ENCODE measurements at regions of chr19 and their contacts with region 1.

Region 1: GRCh38 chr19:43595999-43596841 is at the starts of genes IRGQ and ZNF576:
- DNase-seq: peak; percentile 98
- ATAC-seq: peak; percentile 86
- H3K4me3 ChIP-seq: peak within 1 kb of the TSS; percentile 93
- H3K27ac ChIP-seq: peak within 1 kb of the TSS; percentile 85
- H3K4me1 ChIP-seq: peaks cover 7% of the 10 kb centered on the region; the same call in 1 of the 2 replicates
- H3K27me3 ChIP-seq: no peaks in the 10 kb centered on the region
- CTCF ChIP-seq: peak in 1 of 3 experiments; percentile 12; a peak in 1 of 6 replicates
- EP300 ChIP-seq: no peak
- POLR2A ChIP-seq: peak; percentile 48
- RAD21 ChIP-seq: no peak
- polyA plus RNA-seq, gene IRGQ: 3.3 to 10.7 TPM
- polyA plus RNA-seq, gene ZNF576: 13.2 to 15.2 TPM

Region 2: DNA sequence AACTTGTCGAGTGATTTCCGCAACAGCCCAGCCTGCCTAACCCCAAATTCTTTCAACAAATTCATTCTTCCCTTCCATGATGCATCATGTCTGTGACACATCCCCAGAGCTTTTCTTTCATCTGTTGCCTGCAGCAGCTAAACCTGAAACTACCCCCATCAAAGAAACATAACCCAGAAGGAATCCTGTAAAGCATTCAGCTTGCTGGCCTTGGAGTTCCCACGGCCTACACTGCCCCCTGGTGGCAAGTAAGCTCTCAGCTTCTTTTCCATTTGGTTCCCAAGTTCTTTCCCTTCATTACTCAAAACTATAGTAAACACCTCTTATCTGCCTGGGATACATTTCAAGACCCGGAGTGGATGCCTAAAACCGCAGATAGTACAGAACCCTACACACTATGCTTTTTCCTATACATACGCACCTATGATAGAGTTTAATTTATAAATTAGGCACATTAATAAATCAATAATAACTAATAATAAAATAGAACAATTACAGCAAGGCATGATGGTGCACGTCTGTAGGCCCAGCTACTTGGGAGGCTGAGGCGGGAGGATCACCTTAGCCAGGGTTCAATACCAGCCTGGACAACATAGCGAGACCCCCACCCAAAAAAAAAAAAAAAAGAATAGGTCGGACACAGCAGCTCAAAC is 76.7 kb before region 1 on chr19:
- CTCF ChIA-PET with region 1: interaction called, 37 read pairs
- POLR2A ChIA-PET with region 1: interaction called, 13 read pairs
- RAD21 ChIA-PET with region 1: interaction called, 29 read pairs
- SMC1A ChIA-PET with region 1: interaction called, 6 read pairs
- in situ Hi-C with region 1: no loop called
- intact Hi-C with region 1: no loop called
- DNase-seq: peak; percentile 33
- ATAC-seq: peak; percentile 77
- H3K4me3 ChIP-seq: no peak overlapping the region
- H3K27ac ChIP-seq: no peak overlapping the region
- H3K4me1 ChIP-seq: peaks cover under 1% of the 10 kb centered on the region; the same call in 1 of the 2 replicates
- H3K27me3 ChIP-seq: no peaks in the 10 kb centered on the region
- CTCF ChIP-seq: peak; percentile 76 to 90 (median 88)
- EP300 ChIP-seq: no peak
- POLR2A ChIP-seq: no peak
- RAD21 ChIP-seq: peak; percentile 95

Region 3: DNA sequence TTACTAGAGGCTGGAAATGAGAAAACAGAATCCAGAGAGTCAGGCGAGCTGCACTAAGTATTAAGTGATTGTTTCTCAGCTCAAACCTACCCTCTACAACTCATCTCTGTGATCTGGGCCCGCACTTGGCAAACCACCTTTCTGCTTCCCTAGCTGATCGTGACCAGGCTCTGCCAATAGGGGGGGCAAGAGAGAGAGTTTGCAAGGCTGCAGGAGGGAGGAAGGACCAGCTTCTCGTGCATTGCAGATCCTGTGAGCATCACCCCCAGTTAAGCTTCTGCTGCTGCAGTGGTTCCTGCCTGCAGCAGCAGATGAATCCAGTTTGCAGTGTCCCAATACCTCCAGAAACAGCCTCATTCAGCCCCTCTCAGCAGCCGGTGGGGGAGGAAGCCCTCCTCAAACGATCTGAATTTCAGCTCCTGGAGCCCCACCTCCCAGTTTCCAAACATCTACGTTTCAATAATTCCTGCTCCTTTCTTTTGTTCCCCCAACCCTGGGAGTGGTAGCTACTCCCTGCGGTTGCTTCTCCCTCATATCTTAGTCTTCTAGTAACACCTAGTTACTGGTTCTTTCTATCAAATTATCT is 40.9 kb before region 1 on chr19:
- CTCF ChIA-PET with region 1: interaction called, 169 read pairs
- POLR2A ChIA-PET with region 1: interaction called, 3 read pairs
- RAD21 ChIA-PET with region 1: interaction called, 92 read pairs
- SMC1A ChIA-PET with region 1: interaction called, 59 read pairs
- in situ Hi-C with region 1: no loop called
- intact Hi-C with region 1: loop called (anchors 1 kb)
- DNase-seq: no peak
- ATAC-seq: peak; percentile 94
- H3K4me3 ChIP-seq: no peak overlapping the region
- H3K27ac ChIP-seq: no peak overlapping the region
- H3K4me1 ChIP-seq: no peaks in the 10 kb centered on the region
- H3K27me3 ChIP-seq: no peaks in the 10 kb centered on the region
- CTCF ChIP-seq: peak; percentile 86 to 95 (median 88)
- EP300 ChIP-seq: no peak
- POLR2A ChIP-seq: no peak
- RAD21 ChIP-seq: peak; percentile 75

Region 4: DNA sequence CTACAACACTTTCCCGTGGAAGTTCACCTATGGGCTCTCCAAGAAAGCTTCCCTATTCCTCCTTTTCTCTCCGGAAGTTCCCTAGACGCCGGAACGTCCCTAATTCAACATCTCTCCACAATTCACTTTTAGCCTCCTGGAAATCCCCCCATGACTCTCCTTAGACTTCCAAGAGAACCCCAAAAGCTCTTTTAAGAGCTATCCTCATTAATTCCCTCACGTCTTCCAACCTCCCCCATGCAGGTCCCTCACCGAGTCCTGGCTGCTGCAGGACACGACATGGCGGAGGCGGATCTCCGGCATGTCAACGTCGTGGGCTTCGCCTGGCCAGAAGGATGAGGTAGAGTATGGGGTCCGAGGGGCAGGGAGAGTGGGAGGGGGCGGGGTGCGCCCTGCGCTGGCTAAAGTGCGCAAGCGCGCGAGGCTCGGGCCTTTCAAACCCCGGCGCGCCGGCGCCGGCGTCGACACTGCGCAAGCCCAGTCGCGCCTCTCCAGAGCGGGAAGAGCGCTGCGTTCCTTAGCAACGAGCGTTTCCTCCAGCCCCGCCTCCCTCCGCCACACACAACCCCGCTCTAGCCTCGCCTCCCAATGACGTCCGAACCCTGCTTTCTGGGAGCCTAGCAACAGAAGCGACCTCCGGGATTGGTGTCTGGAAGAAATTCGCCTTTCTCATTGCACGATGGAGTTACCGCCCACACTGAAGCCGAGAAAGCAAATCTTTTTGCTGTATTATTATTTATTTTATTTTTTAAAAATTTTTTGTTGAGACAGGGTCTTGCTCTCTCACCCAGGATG is 20.9 kb before region 1 on chr19 and contains the starts of genes PINLYP and XRCC1:
- CTCF ChIA-PET with region 1: interaction called, 34 read pairs
- POLR2A ChIA-PET with region 1: interaction called, 22 read pairs
- RAD21 ChIA-PET with region 1: interaction called, 33 read pairs
- SMC1A ChIA-PET with region 1: interaction called, 25 read pairs
- in situ Hi-C with region 1: no loop called
- intact Hi-C with region 1: loop called (anchors 1 kb)
- DNase-seq: peak; percentile 93
- ATAC-seq: peak; percentile 99
- H3K4me3 ChIP-seq: peak within 1 kb of the TSS; percentile 95
- H3K27ac ChIP-seq: peak within 1 kb of the TSS; percentile 78
- H3K4me1 ChIP-seq: peaks cover 5% of the 10 kb centered on the region
- H3K27me3 ChIP-seq: no peaks in the 10 kb centered on the region
- CTCF ChIP-seq: no peak
- EP300 ChIP-seq: no peak
- POLR2A ChIP-seq: peak; percentile 72
- RAD21 ChIP-seq: no peak
- polyA plus RNA-seq, gene PINLYP: 23.0 to 26.9 TPM
- polyA plus RNA-seq, gene XRCC1: 2.0 to 7.5 TPM

Region 5: DNA sequence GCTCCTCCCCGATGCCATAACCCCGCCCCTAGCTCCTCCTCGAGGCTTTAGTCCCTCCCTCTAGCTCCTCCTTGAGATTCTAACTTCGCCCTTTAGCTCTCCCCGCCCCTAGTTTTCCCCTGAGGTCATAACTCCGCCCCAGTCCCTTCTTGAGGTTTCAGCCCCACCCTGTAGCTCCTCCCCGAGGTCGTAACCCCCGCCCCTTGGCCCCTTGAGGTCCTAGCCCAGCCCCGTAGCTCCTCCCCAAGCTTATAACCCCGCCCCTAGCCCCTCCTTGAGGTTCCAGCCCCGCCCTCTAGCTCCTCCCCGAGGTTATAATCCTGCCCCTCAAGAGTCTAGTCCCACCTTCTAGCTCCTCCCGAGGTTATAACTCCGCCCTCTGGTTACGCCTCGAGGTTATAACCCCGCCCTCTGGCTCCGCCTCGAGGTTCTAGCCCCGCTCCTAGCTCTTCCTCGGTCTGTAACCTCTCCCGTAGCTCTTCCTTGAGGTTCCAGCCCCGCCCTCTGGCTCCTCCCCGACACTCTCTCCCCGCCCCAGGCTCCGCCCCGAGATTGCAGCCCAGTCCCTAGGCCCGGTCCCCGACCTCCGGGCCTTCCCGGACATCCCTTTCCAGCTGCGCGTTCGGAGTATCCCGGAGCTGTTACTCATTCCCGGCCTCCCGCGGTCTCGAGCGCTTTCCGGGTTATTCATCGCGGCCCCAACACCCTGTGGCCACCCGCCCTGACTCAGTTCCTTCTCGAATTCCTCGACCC is 72.4 kb after region 1 on chr19:
- CTCF ChIA-PET with region 1: interaction called, 14 read pairs
- POLR2A ChIA-PET with region 1: interaction called, 3 read pairs
- RAD21 ChIA-PET with region 1: interaction called, 23 read pairs
- SMC1A ChIA-PET with region 1: interaction called, 6 read pairs
- in situ Hi-C with region 1: no loop called
- intact Hi-C with region 1: no loop called
- DNase-seq: peak; percentile 95
- ATAC-seq: peak; percentile 93
- H3K4me3 ChIP-seq: peak overlapping the region; percentile 84
- H3K27ac ChIP-seq: peak overlapping the region; percentile 51
- H3K4me1 ChIP-seq: peaks cover 14% of the 10 kb centered on the region
- H3K27me3 ChIP-seq: no peaks in the 10 kb centered on the region
- CTCF ChIP-seq: no peak
- EP300 ChIP-seq: no peak
- POLR2A ChIP-seq: no peak; the same call in 1 of the 2 replicates
- RAD21 ChIP-seq: no peak

Region 6: DNA sequence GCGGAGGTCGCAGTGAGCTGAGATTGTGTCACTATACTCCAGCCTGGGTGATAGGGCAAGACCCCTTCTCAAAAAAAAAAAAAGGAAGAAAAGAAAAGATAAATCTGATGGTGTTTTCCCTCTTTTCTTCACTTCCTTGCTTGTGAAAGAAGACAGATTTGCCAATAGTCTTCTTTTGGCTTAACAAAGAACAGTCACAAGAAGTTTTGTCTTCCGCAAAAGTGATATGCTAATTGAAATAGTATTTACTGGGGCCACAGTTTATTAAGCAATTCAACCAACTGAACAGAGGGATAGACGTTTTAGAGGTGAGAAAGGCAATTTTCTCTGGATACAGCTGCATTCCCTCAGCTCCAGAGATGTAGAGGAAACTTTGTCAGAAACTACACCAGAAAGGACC is 96.7 kb after region 1 on chr19:
- CTCF ChIA-PET with region 1: no interaction called
- POLR2A ChIA-PET with region 1: no interaction called
- RAD21 ChIA-PET with region 1: no interaction called
- SMC1A ChIA-PET with region 1: no interaction called
- in situ Hi-C with region 1: no loop called
- intact Hi-C with region 1: no loop called
- DNase-seq: no peak
- ATAC-seq: no peak
- H3K4me3 ChIP-seq: no peak overlapping the region
- H3K27ac ChIP-seq: no peak overlapping the region
- H3K4me1 ChIP-seq: no peaks in the 10 kb centered on the region
- H3K27me3 ChIP-seq: no peaks in the 10 kb centered on the region; a peak in 1 of 4 replicates
- CTCF ChIP-seq: no peak
- EP300 ChIP-seq: no peak
- POLR2A ChIP-seq: no peak
- RAD21 ChIP-seq: no peak